GM10248 (cell line): ENCODE measurements at regions of chr2 and their contacts with region 1.

Region 1: GRCh38 chr2:172931918-172932520 is 143.6 kb upstream of the MAP3K20 start:
- DNase-seq: peak; percentile 45
- CTCF ChIP-seq: peak; percentile 88

Region 2: DNA sequence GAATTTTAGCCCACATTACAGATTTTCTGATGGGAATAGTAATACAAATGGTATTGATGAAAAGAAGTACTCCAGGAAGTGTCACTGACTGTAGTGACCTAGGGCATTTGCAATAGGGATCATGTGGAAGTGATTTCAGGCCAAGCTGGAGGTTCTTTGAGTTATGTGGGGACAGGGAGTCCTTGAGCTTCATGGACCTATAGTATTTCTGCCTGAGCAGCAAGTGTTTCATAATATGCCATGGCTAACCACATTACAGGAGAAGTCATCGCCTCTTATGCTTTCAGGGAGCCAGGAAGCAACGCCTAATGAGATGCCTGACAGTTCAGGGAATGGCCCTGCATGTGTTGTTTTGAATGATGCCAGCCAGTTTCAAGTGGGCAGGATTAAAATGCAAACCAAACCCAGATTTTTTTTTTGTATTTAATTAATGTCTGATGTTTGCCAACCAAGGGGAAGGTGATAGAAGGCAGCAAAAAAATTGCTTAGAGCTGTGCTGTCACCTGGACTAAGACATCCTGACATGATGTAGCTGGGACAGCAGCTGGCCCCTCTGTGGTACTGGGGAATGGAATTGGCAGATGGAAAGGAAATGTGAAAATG is 86.9 kb before region 1 on chr2:
- CTCF ChIA-PET with region 1: interaction called, 12 read pairs
- POLR2A ChIA-PET with region 1: no interaction called
- DNase-seq: no peak
- CTCF ChIP-seq: no peak

Region 3: DNA sequence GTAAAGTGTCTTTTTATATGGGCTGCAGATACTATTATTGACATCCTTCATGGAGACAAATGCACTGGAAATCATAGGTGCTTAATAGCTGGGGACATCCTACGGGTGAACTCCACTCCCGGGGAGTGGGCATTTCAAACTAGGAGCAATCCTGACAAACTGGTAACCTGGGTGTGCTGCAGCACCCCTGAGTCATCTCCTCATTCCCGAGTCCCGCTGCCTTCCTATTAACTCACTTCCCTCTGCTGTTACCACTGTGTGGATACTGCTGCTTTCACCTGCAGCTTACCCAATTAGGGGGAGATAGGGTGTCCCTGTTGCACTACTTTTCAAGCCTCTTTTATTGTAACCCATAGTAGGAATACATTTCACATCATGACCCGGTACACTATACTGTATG is 62.2 kb before region 1 on chr2:
- CTCF ChIA-PET with region 1: interaction called, 42 read pairs
- POLR2A ChIA-PET with region 1: no interaction called
- DNase-seq: no peak
- CTCF ChIP-seq: no peak

Region 4: DNA sequence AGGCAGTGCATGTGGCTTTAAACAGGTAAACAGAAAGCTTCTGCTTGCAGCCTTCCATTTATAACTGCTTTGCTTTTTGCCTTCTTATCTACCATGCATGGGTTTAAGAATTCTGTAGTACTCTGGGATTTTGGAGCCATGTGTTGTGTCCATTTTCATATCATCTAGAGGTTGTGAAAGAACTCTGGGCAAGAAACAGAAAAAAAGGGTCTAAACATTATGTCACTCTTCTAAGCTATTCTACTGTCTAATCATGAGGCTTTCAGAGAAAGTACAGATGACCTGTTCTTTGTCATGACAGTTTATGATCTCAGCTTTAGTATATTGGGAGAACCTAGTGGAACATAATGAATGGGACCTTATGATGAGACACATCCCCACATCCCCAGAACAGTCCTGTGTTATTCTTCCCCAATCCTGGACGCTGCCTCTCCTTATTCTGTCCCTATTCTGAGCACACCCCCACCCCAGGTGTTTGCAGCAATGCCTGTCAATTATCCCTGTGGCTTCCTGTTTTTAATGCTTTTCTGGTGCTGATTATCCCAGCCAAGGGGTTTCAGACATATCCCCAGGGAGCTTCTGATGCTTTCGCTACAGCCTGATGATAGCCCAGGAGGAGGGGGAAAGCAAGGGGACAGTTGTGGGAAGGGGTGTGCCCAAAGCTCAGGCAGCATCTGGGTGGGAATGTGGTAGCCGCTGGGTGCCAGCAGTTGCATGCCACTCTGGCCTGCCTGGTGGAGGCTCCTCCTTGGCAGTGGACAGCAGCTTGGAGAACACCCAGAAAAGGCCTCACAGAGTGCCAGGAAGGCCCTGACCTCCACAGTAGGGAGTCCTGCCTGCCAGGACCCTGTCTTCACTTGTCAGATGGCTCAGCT is 25.8 kb before region 1 on chr2:
- CTCF ChIA-PET with region 1: interaction called, 14 read pairs
- POLR2A ChIA-PET with region 1: no interaction called
- DNase-seq: no peak
- CTCF ChIP-seq: no peak

Region 5: GRCh38 chr2:172921532-172922236 is 10.3 kb before region 1 on chr2:
- CTCF ChIA-PET with region 1: interaction called, 71 read pairs
- POLR2A ChIA-PET with region 1: no interaction called
- DNase-seq: no peak
- CTCF ChIP-seq: no peak

Region 6: GRCh38 chr2:173414823-173415322 is 482.9 kb after region 1 on chr2:
- CTCF ChIA-PET with region 1: no interaction called
- POLR2A ChIA-PET with region 1: no interaction called
- DNase-seq: no peak
- CTCF ChIP-seq: no peak